Esophagus squamous epithelium (tissue), 5 donors: ENCODE measurements at regions of chr9 and their contacts with region 1.

Region 1: DNA sequence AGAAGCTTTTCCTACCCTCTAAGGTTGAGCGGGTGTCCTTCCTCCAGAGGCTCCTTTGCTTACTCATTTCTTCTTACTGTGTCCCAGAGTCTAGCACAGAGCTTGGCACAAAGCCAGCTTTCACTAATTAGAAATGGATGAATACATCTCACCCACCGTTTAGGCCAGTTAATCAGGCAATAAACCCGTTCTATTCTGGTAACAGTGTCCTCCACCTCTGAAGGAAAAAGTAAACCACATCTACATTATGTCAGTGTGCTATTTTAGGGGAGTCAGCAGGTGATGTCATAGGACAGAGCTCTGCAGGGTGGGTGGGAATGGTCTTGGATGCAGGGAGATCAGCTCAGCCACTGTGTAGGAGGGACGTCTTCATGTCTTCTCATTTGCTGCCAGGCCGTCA is 109.2 kb downstream of the OSTF1 start:
- DNase-seq: no peak
- H3K4me3 ChIP-seq: no peak overlapping the region
- H3K27ac ChIP-seq: no peak overlapping the region
- H3K4me1 ChIP-seq: no peaks in the 10 kb centered on the region
- H3K27me3 ChIP-seq: no peaks in the 10 kb centered on the region
- CTCF ChIP-seq: no peak
- POLR2A ChIP-seq: no peak

Region 2: GRCh38 chr9:74858751-74859414 is 338.7 kb before region 1 on chr9:
- intact Hi-C with region 1: no loop called
- DNase-seq: no peak
- H3K4me3 ChIP-seq: no peak overlapping the region
- H3K27ac ChIP-seq: no peak overlapping the region
- H3K4me1 ChIP-seq: no peaks in the 10 kb centered on the region
- H3K27me3 ChIP-seq: no peaks in the 10 kb centered on the region
- CTCF ChIP-seq: no peak
- POLR2A ChIP-seq: no peak

Region 3: DNA sequence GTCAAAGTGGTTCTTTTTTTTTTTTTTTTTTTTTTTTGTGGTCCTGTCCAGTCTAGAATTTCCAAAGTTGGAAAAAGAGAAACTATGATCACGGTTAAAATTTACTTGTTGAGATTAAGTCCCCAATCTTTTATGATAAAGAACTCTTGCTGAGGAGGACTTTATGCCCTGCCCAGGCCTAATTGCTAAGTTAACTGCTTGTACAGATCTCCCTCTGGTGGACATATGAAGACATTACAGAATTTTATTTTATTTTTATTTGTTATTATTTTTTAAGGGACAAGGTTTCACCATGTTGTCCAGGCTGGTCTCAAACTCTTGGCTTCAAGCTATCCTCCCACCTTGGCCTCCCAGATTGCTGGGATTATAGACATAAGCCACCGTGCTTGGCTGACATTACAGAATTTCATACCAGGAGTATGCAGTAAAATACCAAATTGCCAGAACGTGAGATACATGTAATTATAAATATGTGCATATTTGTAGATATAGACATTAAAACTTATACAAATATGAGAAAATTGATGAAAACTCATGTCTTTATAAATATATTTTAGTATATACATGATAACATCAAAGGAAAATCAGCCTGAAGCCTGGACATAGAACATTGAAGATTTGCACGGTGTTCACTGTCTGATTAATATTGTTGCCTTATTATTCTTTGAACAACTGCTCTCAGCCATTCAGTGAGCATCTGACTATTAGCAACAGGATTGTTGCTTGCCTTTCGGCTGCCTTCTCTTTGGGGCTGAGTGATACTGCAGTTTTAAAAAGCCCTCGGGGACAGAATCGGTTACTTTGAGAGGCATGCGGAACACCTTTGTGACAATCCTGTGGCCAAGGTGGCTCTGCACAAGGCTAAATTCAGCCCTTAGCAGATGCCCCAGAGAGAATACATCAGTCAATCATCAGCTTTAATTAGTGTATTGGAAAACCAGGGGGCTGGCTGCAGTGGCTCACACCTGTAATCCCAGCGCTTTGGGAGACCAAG is 1105.7 kb after region 1 on chr9:
- intact Hi-C with region 1: loop called (anchors 10 kb)
- DNase-seq: no peak
- H3K4me3 ChIP-seq: no peak overlapping the region
- H3K27ac ChIP-seq: no peak overlapping the region
- H3K4me1 ChIP-seq: peaks cover 0 to 3% (median 0%) of the 10 kb centered on the region in 3 donors
- H3K27me3 ChIP-seq: peaks cover 0 to 6% (median 0%) of the 10 kb centered on the region in 4 donors
- CTCF ChIP-seq: peak; percentile 58 to 82 (median 68)
- POLR2A ChIP-seq: no peak